Activated CD8-positive, alpha-beta T cell treated with anti-CD3 and anti-CD28 coated beads for 36 hours (primary cell): ENCODE measurements at regions of chr13 and their contacts with region 1.

Region 1: DNA sequence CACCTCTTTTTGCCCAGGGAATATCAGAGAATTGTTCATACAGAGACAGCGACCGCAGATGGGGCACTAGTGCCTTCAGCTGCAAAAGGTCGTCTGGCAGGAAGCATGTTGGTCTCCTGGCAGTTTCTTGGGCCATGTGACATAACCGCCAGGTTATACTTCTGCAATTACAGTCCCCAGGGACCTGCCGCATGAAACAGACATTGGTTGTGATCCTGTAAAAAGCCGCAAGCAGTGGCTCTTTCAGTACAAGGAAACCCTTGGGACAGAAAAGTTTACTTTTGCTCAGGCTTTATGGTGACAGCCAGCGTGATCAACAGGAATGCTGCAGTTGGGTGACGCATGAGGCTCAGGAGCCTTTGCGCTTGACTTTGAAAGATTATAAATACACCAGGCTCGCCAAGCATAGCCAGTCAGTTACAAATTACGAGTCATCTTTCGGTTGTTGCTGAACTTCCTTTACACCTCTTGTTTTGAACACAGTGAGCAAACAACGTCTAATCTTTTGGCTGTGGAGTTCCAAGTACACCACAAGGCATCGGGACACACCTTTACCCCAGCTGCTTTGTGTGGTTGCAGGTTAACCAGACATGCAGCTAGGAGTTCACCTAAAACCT is 50.5 kb upstream of the UBE2L5 start:
- DNase-seq: peak; percentile 78
- ATAC-seq: peak; percentile 64
- H3K4me3 Mint-ChIP-seq: peak overlapping the region; percentile 34
- H3K27ac Mint-ChIP-seq: peak overlapping the region; percentile 85
- H3K4me1 Mint-ChIP-seq: peaks cover 78% of the 10 kb centered on the region
- H3K27me3 Mint-ChIP-seq: no peaks in the 10 kb centered on the region
- CTCF ChIP-seq: no peak

Region 2: DNA sequence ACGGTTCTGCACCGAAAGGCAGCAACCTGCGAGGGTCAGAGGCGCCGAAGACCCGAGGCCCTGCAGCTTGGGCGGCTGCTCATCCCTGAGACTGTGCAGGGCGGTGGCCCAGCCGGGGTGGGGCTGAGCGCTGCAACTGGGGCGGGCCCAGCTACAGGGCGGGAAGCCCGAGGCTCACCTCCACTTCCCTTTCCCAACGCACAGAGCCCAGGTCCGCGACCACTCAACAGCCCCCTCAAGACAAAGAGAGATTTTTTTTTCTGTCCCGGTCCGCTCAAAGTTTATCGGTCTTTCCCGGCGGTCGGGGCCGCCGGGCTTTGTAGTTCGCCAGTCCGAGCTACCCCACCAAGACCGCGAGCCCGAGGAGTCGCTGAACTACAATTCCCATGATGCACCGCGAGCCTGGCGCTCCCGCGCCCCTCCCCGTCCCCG is 65.0 kb before region 1 on chr13:
- CTCF ChIA-PET with region 1: interaction called, 10 read pairs
- POLR2A ChIA-PET with region 1: no interaction called
- intact Hi-C with region 1: no loop called
- DNase-seq: peak; percentile 92
- ATAC-seq: peak; percentile 89
- H3K4me3 Mint-ChIP-seq: peak overlapping the region; percentile 81
- H3K27ac Mint-ChIP-seq: peak overlapping the region; percentile 79
- H3K4me1 Mint-ChIP-seq: peaks cover 17% of the 10 kb centered on the region
- H3K27me3 Mint-ChIP-seq: no peaks in the 10 kb centered on the region
- CTCF ChIP-seq: no peak

Region 3: GRCh38 chr13:30341815-30342570 is 29.8 kb before region 1 on chr13:
- CTCF ChIA-PET with region 1: no interaction called
- POLR2A ChIA-PET with region 1: no interaction called
- intact Hi-C with region 1: no loop called
- DNase-seq: no peak
- ATAC-seq: no peak
- H3K4me3 Mint-ChIP-seq: no peak overlapping the region
- H3K27ac Mint-ChIP-seq: no peak overlapping the region
- H3K4me1 Mint-ChIP-seq: peaks cover 24% of the 10 kb centered on the region
- H3K27me3 Mint-ChIP-seq: no peaks in the 10 kb centered on the region
- CTCF ChIP-seq: no peak

Region 4: GRCh38 chr13:30388406-30389283 is 16.9 kb after region 1 on chr13:
- CTCF ChIA-PET with region 1: interaction called, 18 read pairs
- POLR2A ChIA-PET with region 1: interaction called, 8 read pairs
- intact Hi-C with region 1: no loop called
- DNase-seq: no peak
- ATAC-seq: peak; percentile 15
- H3K4me3 Mint-ChIP-seq: peak overlapping the region; percentile 49
- H3K27ac Mint-ChIP-seq: peak overlapping the region; percentile 77
- H3K4me1 Mint-ChIP-seq: peaks cover 29% of the 10 kb centered on the region
- H3K27me3 Mint-ChIP-seq: no peaks in the 10 kb centered on the region
- CTCF ChIP-seq: no peak

Region 5: GRCh38 chr13:30422054-30422839 is 50.5 kb after region 1 on chr13 and contains the start of gene UBE2L5:
- CTCF ChIA-PET with region 1: no interaction called
- POLR2A ChIA-PET with region 1: no interaction called
- intact Hi-C with region 1: no loop called
- DNase-seq: peak; percentile 52
- ATAC-seq: peak; percentile 90
- H3K4me3 Mint-ChIP-seq: peak within 1 kb of the TSS; percentile 88
- H3K27ac Mint-ChIP-seq: peak within 1 kb of the TSS; percentile 88
- H3K4me1 Mint-ChIP-seq: peaks cover 14% of the 10 kb centered on the region
- H3K27me3 Mint-ChIP-seq: peaks cover 2% of the 10 kb centered on the region
- CTCF ChIP-seq: no peak
- total RNA-seq, gene UBE2L5: not detected